HEK293 (cell line): ENCODE measurements at regions of chr12 and their contacts with region 1.

Region 1: GRCh38 chr12:50043854-50044253 is 13.5 kb upstream of the ASIC1 start:
- H3K4me3 ChIP-seq: no peak overlapping the region
- H3K27ac ChIP-seq: no peak overlapping the region
- H3K4me1 ChIP-seq: no peaks in the 10 kb centered on the region
- CTCF ChIP-seq: no peak

Region 2: DNA sequence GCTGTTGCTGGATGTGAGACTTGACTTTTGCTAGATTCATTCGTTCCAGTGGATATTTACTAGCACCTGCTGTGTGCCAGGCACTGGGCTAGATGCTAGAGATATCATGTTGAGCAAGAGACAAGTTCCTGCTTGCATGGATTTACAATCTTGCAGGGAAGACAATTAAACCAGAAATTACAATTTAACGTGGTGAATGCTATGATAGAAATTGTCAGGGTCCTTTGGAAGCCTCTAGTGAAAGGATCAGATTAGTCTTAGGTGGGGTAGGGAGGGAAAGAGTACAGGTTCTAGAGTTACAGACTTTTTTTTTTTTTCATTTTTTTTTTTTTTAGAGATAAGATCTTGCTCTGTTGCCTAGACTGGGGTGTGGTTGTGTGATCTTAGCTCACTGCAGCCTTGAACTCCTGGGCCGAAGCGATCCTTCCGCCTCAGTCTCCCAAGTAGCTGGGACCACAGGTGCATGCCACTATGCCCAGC is 639.8 kb before region 1 on chr12:
- CTCF ChIA-PET with region 1: no interaction called
- POLR2A ChIA-PET with region 1: no interaction called
- H3K4me3 ChIP-seq: no peak overlapping the region
- H3K27ac ChIP-seq: no peak overlapping the region
- H3K4me1 ChIP-seq: no peaks in the 10 kb centered on the region
- CTCF ChIP-seq: no peak

Region 3: GRCh38 chr12:50074936-50075807 is 31.3 kb after region 1 on chr12:
- CTCF ChIA-PET with region 1: interaction called, 145 read pairs
- POLR2A ChIA-PET with region 1: interaction called, 3 read pairs
- H3K4me3 ChIP-seq: no peak overlapping the region
- H3K27ac ChIP-seq: no peak overlapping the region
- H3K4me1 ChIP-seq: no peaks in the 10 kb centered on the region
- CTCF ChIP-seq: peak; percentile 95